Endothelial cell of umbilical vein (primary cell): ENCODE measurements at regions of chr10 and their contacts with region 1.

Region 1: DNA sequence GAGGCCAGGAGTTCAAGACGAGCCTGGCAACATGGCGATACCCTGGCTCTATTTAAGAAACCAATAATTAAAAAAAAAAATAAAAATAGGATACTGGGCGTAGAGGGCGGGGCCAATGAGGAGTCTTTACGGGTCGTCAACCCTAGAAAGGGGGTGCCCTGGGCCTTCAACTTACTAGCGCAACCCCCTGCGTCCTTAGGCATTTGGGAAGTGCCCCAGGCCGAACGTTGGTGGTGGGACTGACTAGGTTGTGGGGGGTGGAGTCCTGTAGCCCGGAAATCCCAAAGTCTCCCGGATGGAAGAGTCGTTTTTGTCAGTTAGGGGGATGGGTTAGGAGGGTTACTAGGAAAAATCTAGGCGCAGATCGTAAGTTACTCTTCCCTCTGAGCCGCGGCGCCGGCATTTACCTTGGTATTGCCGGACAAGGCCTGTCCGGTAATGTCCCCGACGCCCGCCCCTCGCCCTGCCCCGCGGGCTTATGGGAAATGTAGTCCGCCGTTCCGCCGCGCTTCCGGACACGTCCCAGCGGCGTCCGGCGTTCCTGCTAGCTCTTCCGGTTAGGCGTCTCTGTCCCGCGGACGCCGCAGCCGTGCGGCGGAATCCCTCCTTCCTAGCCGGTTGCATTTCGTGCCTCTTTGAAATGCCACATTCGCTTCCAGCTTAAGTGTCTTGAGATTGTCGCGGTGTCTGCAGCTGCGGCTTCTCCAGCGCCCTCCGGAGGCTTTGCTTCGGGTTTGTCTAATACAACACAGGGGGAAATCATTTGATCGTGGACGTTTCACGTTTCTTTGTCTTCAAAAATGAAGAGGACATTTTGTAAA is 1.3 kb upstream of the ACBD5 start:
- DNase-seq: peak; percentile 95
- H3K4me3 ChIP-seq: peak overlapping the region; percentile 21 to 84 (median 69)
- H3K27ac ChIP-seq: peak overlapping the region; percentile 83
- H3K4me1 ChIP-seq: peaks cover 18% of the 10 kb centered on the region
- H3K27me3 ChIP-seq: no peaks in the 10 kb centered on the region
- CTCF ChIP-seq: peak; percentile 16 to 24
- POLR2A ChIP-seq: peak; percentile 95

Region 2: GRCh38 chr10:26697163-26697921 is 544.5 kb before region 1 on chr10 and contains the start of gene PDSS1:
- CTCF ChIA-PET with region 1: no interaction called
- POLR2A ChIA-PET with region 1: no interaction called
- dilution Hi-C with region 1: no loop called
- intact Hi-C with region 1: loop called (anchors 5 kb)
- DNase-seq: peak; percentile 69
- H3K4me3 ChIP-seq: peak within 1 kb of the TSS; percentile 64 to 91 (median 89)
- H3K27ac ChIP-seq: peak within 1 kb of the TSS; percentile 55
- H3K4me1 ChIP-seq: peaks cover 10% of the 10 kb centered on the region
- H3K27me3 ChIP-seq: no peaks in the 10 kb centered on the region
- CTCF ChIP-seq: no peak
- POLR2A ChIP-seq: peak; percentile 84
- total RNA-seq, gene PDSS1: 11.0 and 11.3 TPM in 2 replicates

Region 3: GRCh38 chr10:27088119-27089044 is 153.5 kb before region 1 on chr10:
- CTCF ChIA-PET with region 1: no interaction called
- POLR2A ChIA-PET with region 1: no interaction called
- dilution Hi-C with region 1: no loop called
- intact Hi-C with region 1: no loop called
- DNase-seq: no peak
- H3K4me3 ChIP-seq: no peak overlapping the region
- H3K27ac ChIP-seq: no peak overlapping the region
- H3K4me1 ChIP-seq: no peaks in the 10 kb centered on the region
- H3K27me3 ChIP-seq: no peaks in the 10 kb centered on the region
- CTCF ChIP-seq: no peak
- POLR2A ChIP-seq: no peak

Region 4: DNA sequence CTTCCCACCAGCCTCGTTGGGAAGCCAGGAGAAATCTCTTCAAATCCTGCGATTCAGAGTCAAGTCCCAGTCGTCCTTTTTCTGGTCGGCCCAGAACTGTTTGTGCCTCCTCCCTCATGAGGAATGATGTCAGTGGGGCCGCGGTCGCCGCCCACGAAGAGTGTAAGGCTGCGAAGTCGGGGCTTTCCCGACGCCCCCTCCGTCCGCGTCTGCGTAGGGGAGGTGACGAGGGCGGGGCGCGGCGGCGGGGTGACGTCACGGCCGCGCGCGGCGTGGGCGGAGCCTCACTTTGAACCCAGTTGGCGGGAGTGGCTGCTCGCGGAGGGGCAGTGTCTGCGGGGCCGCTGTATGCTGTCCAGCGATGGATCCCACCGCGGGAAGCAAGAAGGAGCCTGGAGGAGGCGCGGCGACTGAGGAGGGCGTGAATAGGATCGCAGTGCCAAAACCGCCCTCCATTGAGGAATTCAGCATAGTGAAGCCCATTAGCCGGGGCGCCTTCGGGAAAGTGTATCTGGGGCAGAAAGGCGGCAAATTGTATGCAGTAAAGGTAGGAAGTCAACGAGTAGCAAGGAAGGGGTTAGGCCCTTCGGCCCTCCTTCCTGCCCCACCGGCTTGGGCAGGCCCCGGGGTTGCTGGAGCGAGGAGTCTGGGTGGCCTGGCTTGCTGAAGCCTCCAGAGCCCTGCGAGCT is 86.7 kb before region 1 on chr10 and contains the start of gene MASTL:
- CTCF ChIA-PET with region 1: interaction called, 5 read pairs
- POLR2A ChIA-PET with region 1: interaction called, 6 read pairs
- dilution Hi-C with region 1: no loop called
- intact Hi-C with region 1: loop called (anchors 1 kb)
- DNase-seq: peak; percentile 95
- H3K4me3 ChIP-seq: peak within 1 kb of the TSS; percentile 74 to 95 (median 75)
- H3K27ac ChIP-seq: peak within 1 kb of the TSS; percentile 92
- H3K4me1 ChIP-seq: peaks cover 13% of the 10 kb centered on the region
- H3K27me3 ChIP-seq: no peaks in the 10 kb centered on the region
- CTCF ChIP-seq: no peak
- POLR2A ChIP-seq: peak; percentile 58
- total RNA-seq, gene MASTL: 16.7 and 17.8 TPM in 2 replicates

Region 5: DNA sequence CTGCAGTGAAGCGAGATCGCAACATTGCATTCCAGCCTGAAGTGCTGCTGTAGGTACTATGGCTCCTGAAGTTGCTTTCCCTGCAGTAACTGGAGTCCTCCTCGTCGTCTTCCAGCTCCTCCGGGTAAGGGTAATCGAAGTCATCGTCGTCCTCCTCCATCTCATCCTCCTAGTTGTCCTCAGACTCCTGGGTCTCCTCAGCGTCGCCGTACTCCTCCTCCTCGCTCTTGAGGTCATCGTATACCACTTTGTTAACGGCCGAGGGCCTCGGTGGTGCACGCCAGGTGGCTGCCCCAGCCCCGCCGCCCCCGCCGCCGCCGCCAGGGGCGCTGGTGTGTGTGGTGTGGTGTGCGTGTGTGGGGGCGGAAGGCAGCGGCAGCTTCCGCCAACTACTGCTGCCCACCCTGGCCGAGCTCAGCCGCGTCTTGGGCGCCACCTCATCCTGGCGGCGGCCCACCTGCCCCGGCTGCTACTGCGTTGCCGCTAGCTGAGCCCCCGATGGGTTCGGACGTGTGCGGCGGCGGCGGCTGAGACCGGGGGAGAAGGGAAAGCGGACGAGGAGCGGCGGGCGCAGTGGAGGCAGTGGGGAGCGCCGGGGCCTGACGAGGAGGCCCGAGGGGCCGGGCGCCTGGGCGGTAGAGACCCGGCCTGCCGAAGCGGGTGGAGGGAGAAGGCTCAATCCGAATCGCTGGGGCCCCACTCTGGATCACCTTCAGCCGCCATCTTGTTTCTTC is 10.6 kb after region 1 on chr10:
- CTCF ChIA-PET with region 1: interaction called, 32 read pairs
- POLR2A ChIA-PET with region 1: interaction called, 5 read pairs
- dilution Hi-C with region 1: no loop called
- intact Hi-C with region 1: loop called (anchors 1 kb)
- DNase-seq: peak; percentile 65
- H3K4me3 ChIP-seq: peak overlapping the region in 2 of 3 experiments; percentile 50 to 66
- H3K27ac ChIP-seq: peak overlapping the region; percentile 40
- H3K4me1 ChIP-seq: no peaks in the 10 kb centered on the region
- H3K27me3 ChIP-seq: peaks cover 0 to 3% of the 10 kb centered on the region in 2 experiments
- CTCF ChIP-seq: peak; percentile 14 to 56
- POLR2A ChIP-seq: peak; percentile 59

Region 6: GRCh38 chr10:27328946-27329345 is 87.1 kb after region 1 on chr10:
- CTCF ChIA-PET with region 1: no interaction called
- POLR2A ChIA-PET with region 1: no interaction called
- dilution Hi-C with region 1: no loop called
- intact Hi-C with region 1: no loop called
- DNase-seq: no peak
- H3K4me3 ChIP-seq: no peak overlapping the region
- H3K27ac ChIP-seq: no peak overlapping the region
- H3K4me1 ChIP-seq: no peaks in the 10 kb centered on the region
- H3K27me3 ChIP-seq: no peaks in the 10 kb centered on the region
- CTCF ChIP-seq: no peak
- POLR2A ChIP-seq: no peak

Region 7: DNA sequence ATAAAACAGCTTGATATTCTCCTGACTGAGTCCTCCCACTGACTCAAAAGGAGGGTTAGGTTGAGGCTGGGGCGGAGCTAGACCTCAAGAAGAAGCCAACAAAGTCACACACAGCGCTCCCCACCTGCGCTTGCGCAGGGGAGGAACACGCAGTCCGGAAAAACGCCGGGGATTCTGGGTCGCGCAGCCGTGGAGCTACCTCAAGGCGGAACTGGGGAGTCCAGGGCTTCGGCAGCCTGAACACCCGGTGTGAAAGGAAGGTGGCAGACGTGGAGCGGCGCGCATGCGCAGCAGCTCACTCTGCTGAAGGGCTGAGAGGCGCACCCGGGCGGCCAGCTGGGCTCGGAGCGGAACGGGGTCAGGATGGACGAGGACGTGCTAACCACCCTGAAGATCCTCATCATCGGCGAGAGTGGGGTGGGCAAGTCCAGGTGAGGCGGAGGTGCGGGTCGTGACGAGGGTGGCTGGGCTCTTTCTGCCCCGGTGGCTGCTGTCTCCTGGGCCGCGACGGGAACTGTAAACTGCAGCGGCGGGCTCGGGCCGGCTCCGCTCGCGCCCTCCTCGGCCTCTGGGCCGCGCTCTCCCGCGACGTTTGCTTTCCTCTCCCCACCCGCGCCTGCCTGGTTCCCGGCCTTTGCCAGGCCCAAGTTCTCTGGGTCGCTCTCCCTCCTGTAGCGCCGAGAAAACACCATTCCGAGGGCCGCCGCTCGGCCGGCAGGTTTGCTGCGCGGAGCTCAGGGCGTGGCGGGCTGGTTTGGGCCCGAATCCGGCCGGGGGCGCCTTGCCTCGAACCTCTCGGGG is 262.3 kb after region 1 on chr10 and contains the start of gene RAB18:
- CTCF ChIA-PET with region 1: no interaction called
- POLR2A ChIA-PET with region 1: no interaction called
- dilution Hi-C with region 1: no loop called
- intact Hi-C with region 1: loop called (anchors 5 kb)
- DNase-seq: peak; percentile 99
- H3K4me3 ChIP-seq: peak within 1 kb of the TSS; percentile 79 to 97 (median 90)
- H3K27ac ChIP-seq: peak within 1 kb of the TSS; percentile 78
- H3K4me1 ChIP-seq: peaks cover 13% of the 10 kb centered on the region
- H3K27me3 ChIP-seq: peaks cover 11 to 13% of the 10 kb centered on the region in 2 experiments
- CTCF ChIP-seq: no peak
- POLR2A ChIP-seq: peak; percentile 95
- total RNA-seq, gene RAB18: 108 TPM in 2 replicates